ENCODE measurements at regions of chr11 and their contacts with region 1.

Region 1: DNA sequence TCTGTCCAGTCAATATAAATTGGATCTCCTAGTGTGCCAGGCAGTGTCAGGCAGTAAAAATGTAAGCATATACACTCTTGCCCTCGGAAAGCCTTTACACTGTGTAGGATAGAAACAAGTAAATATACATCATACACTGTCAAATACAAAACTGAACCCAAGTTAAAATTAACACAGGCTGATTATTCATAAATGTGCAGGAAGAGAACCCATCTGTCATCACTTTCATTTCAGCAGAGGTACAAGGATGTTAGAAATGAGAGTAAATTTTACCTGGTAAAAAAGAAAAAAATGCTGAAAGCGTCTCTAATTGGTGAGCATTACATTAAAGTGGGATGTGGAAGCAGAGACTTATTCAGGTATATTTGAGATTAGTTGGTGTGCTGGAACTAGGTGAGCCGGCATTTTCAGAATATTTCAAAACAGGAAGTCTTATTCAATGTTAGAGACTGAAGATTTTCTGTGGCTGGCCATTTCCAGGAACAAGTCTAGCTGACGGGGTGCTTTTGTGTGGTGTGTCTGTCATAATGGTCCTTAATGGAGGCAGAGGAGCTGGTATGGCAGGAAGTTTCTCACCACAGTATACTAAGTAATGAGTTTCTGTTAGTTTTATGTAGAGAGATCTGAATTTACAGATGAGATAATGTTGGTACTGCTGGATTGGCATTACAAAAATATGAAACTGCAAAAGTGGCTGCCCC is 192.6 kb downstream of the CASP12 start:
- DNase-seq: peak; percentile 87
- H3K4me3 Mint-ChIP-seq: peak overlapping the region; percentile 64
- H3K27ac Mint-ChIP-seq: peak overlapping the region; percentile 89
- H3K4me1 Mint-ChIP-seq: peaks cover 48% of the 10 kb centered on the region
- H3K27me3 Mint-ChIP-seq: no peaks in the 10 kb centered on the region

Region 2: GRCh38 chr11:104623518-104623917 is 82.1 kb before region 1 on chr11:
- CTCF ChIA-PET with region 1: no interaction called
- POLR2A ChIA-PET with region 1: interaction called, 6 read pairs
- intact Hi-C with region 1: loop called (anchors 1 kb)
- DNase-seq: no peak
- H3K4me3 Mint-ChIP-seq: no peak overlapping the region
- H3K27ac Mint-ChIP-seq: no peak overlapping the region
- H3K4me1 Mint-ChIP-seq: peaks cover 21% of the 10 kb centered on the region
- H3K27me3 Mint-ChIP-seq: no peaks in the 10 kb centered on the region

Region 3: DNA sequence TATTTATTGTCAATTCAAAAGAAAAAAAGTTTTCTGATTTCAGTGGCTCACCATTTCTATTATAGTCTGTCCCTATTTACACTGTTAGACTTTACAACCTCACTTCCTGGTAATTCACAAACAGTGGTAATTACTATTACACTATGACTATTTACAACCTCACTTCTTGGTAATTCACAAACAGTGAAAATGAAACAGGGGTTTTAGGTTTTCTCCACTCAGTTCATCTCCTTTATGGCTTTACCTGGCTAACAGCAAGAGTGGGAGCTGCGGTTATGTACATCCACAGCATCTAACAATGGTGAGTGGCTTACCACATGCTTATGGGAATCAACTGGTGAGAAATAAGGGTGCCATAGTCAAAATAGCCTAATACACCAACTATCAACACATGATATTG is 26.2 kb after region 1 on chr11:
- CTCF ChIA-PET with region 1: no interaction called
- POLR2A ChIA-PET with region 1: no interaction called
- intact Hi-C with region 1: loop called (anchors 1 kb)
- DNase-seq: peak; percentile 32
- H3K4me3 Mint-ChIP-seq: no peak overlapping the region
- H3K27ac Mint-ChIP-seq: no peak overlapping the region
- H3K4me1 Mint-ChIP-seq: peaks cover 13% of the 10 kb centered on the region
- H3K27me3 Mint-ChIP-seq: no peaks in the 10 kb centered on the region

Region 4: DNA sequence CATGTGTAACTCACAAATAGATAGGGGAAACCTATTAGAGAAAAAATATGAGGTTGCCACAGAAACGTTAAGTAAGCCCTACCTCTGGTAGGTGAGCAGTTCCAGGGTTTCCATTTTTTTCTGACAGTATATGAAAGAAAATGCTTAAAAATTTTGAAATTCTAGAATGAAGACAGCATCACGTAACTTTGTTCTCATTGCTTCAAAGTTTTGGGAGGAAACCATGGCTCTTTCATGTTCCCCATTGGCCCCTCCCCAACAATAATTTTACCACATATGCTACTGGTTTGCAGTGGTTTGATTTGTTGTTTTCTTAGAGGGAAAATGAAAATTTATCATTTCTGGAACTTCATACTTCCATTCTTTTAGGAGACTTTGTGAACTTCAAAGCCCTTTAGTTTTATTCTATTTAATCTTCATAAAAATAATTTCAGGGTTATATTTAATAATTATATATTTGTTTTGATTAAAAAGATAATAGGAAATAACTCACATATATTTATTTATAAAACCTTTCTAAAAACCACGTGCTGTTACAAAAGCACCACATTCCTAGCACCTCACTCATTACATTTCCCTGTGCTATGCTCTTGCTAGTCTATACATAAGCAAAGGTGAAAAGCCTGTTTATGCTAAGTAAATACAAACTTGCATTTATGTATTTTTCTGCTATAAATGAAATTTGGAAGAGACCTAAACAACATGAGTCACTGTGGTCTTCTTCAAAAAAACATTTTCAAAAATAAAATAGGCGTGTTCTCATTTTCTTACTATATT is 79.2 kb after region 1 on chr11:
- CTCF ChIA-PET with region 1: no interaction called
- POLR2A ChIA-PET with region 1: no interaction called
- intact Hi-C with region 1: no loop called
- DNase-seq: no peak
- H3K4me3 Mint-ChIP-seq: no peak overlapping the region
- H3K27ac Mint-ChIP-seq: no peak overlapping the region
- H3K4me1 Mint-ChIP-seq: no peaks in the 10 kb centered on the region
- H3K27me3 Mint-ChIP-seq: no peaks in the 10 kb centered on the region

Region 5: DNA sequence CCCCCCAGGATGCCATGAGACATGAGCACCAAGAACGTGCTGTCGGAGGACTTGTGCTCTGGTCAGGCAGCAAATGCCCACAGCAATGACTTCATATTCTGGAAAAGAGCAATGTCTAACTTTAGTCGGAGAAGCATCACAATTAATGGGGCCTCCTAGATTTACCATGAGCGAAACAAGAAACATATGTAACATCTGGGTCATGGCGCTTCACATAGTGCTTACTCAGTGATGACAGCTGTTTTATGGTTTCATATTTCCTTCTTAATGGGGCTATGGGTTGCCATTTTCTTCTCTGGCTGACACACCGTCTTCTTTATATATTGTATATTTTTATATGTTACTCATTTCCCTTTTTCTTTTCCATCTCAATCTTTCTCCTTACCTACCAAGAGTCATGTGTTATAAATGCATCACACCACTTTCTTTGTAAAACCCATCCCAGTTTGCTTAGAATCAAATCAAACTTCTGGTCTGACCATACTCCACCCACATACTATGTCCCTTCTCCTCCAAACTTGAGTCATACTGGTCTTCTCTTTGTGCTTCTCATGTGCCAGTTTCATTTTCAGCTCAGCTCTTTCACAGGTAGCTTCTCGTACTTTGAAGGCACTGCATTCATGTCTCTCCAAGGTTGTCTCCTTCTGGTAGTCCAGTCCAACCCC is 202.0 kb after region 1 on chr11:
- CTCF ChIA-PET with region 1: no interaction called
- POLR2A ChIA-PET with region 1: interaction called, 4 read pairs
- intact Hi-C with region 1: loop called (anchors 1 kb)
- DNase-seq: peak; percentile 20
- H3K4me3 Mint-ChIP-seq: peak overlapping the region; percentile 24
- H3K27ac Mint-ChIP-seq: peak overlapping the region; percentile 76
- H3K4me1 Mint-ChIP-seq: peaks cover 30% of the 10 kb centered on the region
- H3K27me3 Mint-ChIP-seq: no peaks in the 10 kb centered on the region

Region 6: GRCh38 chr11:105109855-105110687 is 404.4 kb after region 1 on chr11:
- CTCF ChIA-PET with region 1: no interaction called
- POLR2A ChIA-PET with region 1: no interaction called
- intact Hi-C with region 1: loop called (anchors 10 kb)
- DNase-seq: no peak
- H3K4me3 Mint-ChIP-seq: no peak overlapping the region
- H3K27ac Mint-ChIP-seq: no peak overlapping the region
- H3K4me1 Mint-ChIP-seq: peaks cover 29% of the 10 kb centered on the region
- H3K27me3 Mint-ChIP-seq: peaks cover 5% of the 10 kb centered on the region

Region 7: GRCh38 chr11:106076919-106077608 is 1371.4 kb after region 1 on chr11 and contains the start of gene KBTBD3:
- CTCF ChIA-PET with region 1: no interaction called
- POLR2A ChIA-PET with region 1: no interaction called
- intact Hi-C with region 1: loop called (anchors 5 kb)
- DNase-seq: peak; percentile 99
- H3K4me3 Mint-ChIP-seq: peak within 1 kb of the TSS; percentile 96
- H3K27ac Mint-ChIP-seq: peak within 1 kb of the TSS; percentile 96
- H3K4me1 Mint-ChIP-seq: peaks cover 52% of the 10 kb centered on the region
- H3K27me3 Mint-ChIP-seq: no peaks in the 10 kb centered on the region
- total RNA-seq, gene KBTBD3: 7.0 to 7.7 TPM

Measured in activated CD4-positive, alpha-beta memory T cell treated with anti-CD3 and anti-CD28 coated beads for 36 hours (primary cell).